ENCODE measurements at regions of chr14 and their contacts with region 1.

Region 1: DNA sequence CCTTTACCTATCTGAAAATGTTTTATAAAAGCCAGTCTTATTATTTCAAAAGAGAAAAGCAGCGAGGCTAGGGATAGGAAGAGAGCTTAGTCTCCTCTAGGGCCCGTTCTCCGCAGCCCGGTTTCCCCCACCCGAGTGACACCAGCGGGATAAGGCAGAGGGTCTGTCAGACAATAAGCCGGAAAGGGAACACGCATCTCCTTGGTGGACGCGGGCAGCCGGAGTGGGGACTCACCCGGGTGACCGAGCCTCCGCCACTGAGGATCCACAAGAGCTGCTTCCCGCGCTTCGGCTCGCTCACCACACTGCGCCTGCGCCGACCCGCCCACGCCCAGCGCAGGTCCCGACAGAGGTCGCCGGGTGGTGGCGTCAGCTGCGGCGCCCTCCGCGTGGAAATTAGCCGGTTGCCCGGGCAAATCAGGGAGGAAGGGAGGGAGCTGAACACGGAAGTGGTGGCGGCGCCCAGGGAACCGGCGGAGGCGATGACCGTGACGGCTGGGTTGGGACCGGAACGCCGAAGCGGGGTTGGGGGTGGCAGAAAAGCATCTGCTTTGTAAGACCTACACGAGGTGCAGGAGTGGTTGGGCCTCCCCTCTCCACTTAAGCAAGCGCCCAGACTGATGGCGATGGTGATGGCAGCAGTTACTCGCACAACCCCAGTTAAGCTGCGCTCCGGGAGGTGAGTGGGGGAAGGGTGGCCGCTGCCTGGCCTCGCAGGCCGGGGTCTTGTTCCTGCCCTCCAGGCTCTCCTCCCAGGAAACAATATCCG is at the starts of genes SOCS4 and WDHD1:
- DNase-seq: peak; percentile 94 to 97 (median 97)
- H3K4me3 ChIP-seq: peak within 1 kb of the TSS; percentile 76 to 99 (median 92)
- H3K27ac ChIP-seq: peak within 1 kb of the TSS; percentile 79 to 87
- H3K4me1 ChIP-seq: peaks cover 16 to 39% (median 28%) of the 10 kb centered on the region in 4 experiments
- H3K27me3 ChIP-seq: no peaks in the 10 kb centered on the region

Region 2: GRCh38 chr14:55038708-55039107 is 11.7 kb after region 1 on chr14:
- CTCF ChIA-PET with region 1: no interaction called
- POLR2A ChIA-PET with region 1: no interaction called
- DNase-seq: no peak
- H3K4me3 ChIP-seq: no peak overlapping the region
- H3K27ac ChIP-seq: no peak overlapping the region
- H3K4me1 ChIP-seq: no peaks in the 10 kb centered on the region
- H3K27me3 ChIP-seq: no peaks in the 10 kb centered on the region

Region 3: DNA sequence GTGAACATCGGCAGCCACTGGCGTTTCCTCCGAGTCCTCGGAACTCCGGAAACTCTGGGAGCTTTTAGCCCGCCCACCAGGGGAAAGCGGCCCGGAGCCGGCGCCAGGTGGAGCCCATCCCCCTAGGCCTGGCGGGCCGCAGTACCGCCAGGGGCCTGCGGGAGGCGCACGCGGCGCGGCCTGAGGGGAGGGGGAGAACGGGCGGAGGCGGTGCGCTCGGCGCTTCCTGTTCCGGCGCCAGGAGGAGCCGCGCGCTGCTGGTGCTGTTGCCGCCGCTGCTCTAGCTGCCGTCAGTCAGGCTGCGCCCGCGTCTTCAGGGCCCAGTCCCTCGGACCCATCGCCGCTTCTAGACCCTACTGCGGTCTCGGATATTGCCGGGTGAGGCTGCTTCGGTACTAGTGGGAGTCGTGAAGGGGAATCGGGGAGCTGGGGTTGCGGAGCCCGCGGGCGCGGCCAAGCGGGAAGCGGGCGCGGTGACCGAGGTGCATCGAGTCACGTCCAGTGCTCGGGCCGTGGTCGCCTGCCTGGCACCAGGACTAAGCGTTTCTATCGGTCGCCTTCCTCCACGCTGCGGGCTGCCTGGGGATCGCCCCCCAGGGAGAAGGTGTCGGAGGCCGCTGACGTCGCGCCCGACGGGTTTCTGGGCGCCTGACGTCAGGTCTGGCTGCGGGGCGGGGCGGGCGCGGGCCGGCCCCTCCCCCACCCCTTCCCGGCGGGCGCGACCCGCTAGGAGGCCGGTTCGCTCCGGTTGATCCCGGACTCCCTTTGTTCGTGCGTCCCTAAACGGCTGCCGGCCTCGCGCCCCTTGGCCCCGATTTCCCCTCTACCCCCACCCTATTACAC is 24.7 kb after region 1 on chr14 and contains the start of gene MAPK1IP1L:
- CTCF ChIA-PET with region 1: interaction called, 19 read pairs
- POLR2A ChIA-PET with region 1: interaction called, 10 read pairs
- DNase-seq: peak; percentile 89 to 94 (median 93)
- H3K4me3 ChIP-seq: peak within 1 kb of the TSS; percentile 98 to 99 (median 98)
- H3K27ac ChIP-seq: peak within 1 kb of the TSS; percentile 98 to 99
- H3K4me1 ChIP-seq: peaks cover 11 to 24% (median 19%) of the 10 kb centered on the region in 4 experiments
- H3K27me3 ChIP-seq: no peaks in the 10 kb centered on the region

Measured in common myeloid progenitor, CD34-positive (primary cell).